ENCODE measurements at regions of chr3 and their contacts with region 1.

Region 1: DNA sequence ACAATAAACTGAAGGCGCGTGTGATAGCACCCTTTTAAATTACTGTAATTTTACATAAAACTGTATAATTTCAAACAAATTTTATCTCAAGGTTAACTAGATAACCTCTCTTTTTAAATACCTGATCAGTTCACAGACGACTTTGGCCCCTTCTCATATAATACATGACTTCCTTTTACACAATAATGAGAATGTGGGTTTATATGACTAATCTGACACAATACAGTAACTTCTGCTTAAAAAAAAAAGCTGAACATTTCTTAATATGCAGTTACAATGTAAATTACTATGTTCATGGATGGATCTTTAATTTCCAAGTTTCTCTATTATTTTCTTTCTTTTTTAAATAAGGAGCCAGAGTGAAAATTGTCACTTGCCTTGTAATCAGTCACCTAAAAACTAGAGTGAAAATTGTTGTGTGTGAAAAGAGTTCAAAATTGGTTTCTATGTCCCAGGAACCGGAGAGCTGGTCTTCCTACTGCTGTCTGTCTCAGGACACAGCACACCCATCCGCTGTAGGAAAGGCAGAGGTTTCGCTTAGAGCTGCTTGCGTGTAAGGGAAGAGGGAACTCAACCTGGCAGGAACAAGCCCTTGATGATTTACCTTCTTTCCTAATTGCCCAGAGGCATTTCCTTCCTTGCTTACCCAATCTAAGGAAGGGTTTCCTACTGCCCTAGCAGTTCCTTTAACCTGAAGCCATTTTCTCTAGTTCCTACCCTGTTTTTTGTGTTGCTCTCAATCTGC is 33.3 kb downstream of the PLD1 start:
- DNase-seq: peak; percentile 53 to 92 (median 89)
- H3K4me3 ChIP-seq: peak overlapping the region; percentile 19 to 66 (median 50)
- H3K4me3 Mint-ChIP-seq: peak overlapping the region; percentile 81 to 91
- H3K27ac ChIP-seq: peak overlapping the region; percentile 89 to 97
- H3K27ac Mint-ChIP-seq: peak overlapping the region; percentile 98 to 100 (median 100)
- H3K4me1 ChIP-seq: peaks cover 31 to 44% of the 10 kb centered on the region in 2 donors
- H3K4me1 Mint-ChIP-seq: peaks cover 39% of the 10 kb centered on the region
- H3K27me3 ChIP-seq: no peaks in the 10 kb centered on the region
- H3K27me3 Mint-ChIP-seq: peaks cover 0 to 4% (median 3%) of the 10 kb centered on the region in 3 donors
- CTCF ChIP-seq: no peak

Region 2: GRCh38 chr3:171809821-171810628 is 33.0 kb after region 1 on chr3 and contains the start of gene PLD1:
- intact Hi-C with region 1: loop called (anchors 5 kb)
- DNase-seq: peak; percentile 63 to 82 (median 63)
- H3K4me3 ChIP-seq: peak within 1 kb of the TSS; percentile 65 to 96 (median 84)
- H3K4me3 Mint-ChIP-seq: peak within 1 kb of the TSS; percentile 92 to 94
- H3K27ac ChIP-seq: peak within 1 kb of the TSS; percentile 95 to 96
- H3K27ac Mint-ChIP-seq: peak within 1 kb of the TSS; percentile 88 to 97 (median 96)
- H3K4me1 ChIP-seq: peaks cover 66 to 67% of the 10 kb centered on the region in 2 donors
- H3K4me1 Mint-ChIP-seq: peaks cover 67% of the 10 kb centered on the region
- H3K27me3 ChIP-seq: no peaks in the 10 kb centered on the region
- H3K27me3 Mint-ChIP-seq: no peaks in the 10 kb centered on the region
- CTCF ChIP-seq: no peak
- polyA plus RNA-seq, gene PLD1: 5.1 to 7.9 (median 5.8) TPM

Region 3: DNA sequence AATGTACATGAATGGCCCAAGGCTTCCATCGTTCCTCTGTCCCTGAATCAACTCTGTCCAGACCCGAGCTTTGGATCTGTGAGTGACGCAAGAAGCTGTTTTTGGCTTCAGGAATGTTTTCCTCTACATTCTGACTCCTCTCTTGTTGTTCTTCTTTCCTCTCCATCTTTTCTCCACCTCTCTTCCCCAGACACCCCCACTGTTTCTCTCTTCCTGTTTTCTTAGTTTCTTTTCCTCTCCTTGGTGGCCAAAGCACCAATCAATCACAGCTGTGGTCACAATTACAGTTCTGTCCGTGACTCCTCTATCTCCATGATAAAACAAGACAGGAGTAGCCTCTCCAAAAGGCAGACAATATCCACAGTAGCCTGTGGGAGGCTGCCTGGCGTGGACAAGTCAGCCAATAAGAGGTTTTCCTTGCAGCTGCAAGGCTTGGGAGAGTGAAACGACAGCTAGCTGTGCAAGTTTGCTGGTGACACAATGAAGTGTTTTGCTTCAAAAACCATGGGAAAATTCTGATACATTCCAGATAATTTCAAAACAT is 61.3 kb after region 1 on chr3:
- intact Hi-C with region 1: loop called in 1 of 2 experiments (anchors 5 kb)
- DNase-seq: peak in 2 of 3 donors; percentile 35 to 39
- H3K4me3 ChIP-seq: peak overlapping the region in 1 of 3 experiments; percentile 41
- H3K4me3 Mint-ChIP-seq: peak overlapping the region; percentile 31 to 72
- H3K27ac ChIP-seq: no peak overlapping the region
- H3K27ac Mint-ChIP-seq: peak overlapping the region in 6 of 7 donors; percentile 10 to 60 (median 36)
- H3K4me1 ChIP-seq: peaks cover 26 to 29% of the 10 kb centered on the region in 2 donors
- H3K4me1 Mint-ChIP-seq: peaks cover 30% of the 10 kb centered on the region
- H3K27me3 ChIP-seq: no peaks in the 10 kb centered on the region
- H3K27me3 Mint-ChIP-seq: peaks cover 0 to 1% (median 0%) of the 10 kb centered on the region in 3 donors
- CTCF ChIP-seq: no peak

Measured in CD14-positive monocyte (primary cell).